GM12878 (cell line): ENCODE measurements at regions of chr9 and their contacts with region 1.

Region 1: DNA sequence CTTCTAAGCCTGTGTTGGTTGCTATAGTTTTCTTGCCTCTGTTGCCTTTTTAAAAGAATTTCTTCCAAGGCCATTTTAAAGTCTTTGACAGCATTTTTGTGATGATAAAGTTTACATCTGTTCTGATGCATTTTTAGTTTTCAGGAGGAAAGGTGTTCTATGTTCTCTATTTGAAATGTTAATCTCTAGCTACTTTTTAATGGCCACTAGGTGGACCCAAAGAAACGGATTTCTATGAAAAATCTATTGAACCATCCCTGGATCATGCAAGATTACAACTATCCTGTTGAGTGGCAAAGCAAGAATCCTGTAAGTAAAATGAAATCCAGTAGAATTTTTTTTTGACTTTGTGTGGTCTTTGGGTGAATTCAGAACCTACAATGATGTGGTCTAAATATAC is 60.2 kb downstream of the MELK start:
- DNase-seq: no peak
- ATAC-seq: peak; percentile 63
- H3K4me3 ChIP-seq: no peak overlapping the region
- H3K27ac ChIP-seq: no peak overlapping the region
- H3K4me1 ChIP-seq: no peaks in the 10 kb centered on the region
- H3K27me3 ChIP-seq: no peaks in the 10 kb centered on the region
- CTCF ChIP-seq: peak; percentile 46 to 56 (median 52); a peak in 5 of 6 replicates
- EP300 ChIP-seq: no peak
- POLR2A ChIP-seq: no peak
- RAD21 ChIP-seq: peak; percentile 57

Region 2: DNA sequence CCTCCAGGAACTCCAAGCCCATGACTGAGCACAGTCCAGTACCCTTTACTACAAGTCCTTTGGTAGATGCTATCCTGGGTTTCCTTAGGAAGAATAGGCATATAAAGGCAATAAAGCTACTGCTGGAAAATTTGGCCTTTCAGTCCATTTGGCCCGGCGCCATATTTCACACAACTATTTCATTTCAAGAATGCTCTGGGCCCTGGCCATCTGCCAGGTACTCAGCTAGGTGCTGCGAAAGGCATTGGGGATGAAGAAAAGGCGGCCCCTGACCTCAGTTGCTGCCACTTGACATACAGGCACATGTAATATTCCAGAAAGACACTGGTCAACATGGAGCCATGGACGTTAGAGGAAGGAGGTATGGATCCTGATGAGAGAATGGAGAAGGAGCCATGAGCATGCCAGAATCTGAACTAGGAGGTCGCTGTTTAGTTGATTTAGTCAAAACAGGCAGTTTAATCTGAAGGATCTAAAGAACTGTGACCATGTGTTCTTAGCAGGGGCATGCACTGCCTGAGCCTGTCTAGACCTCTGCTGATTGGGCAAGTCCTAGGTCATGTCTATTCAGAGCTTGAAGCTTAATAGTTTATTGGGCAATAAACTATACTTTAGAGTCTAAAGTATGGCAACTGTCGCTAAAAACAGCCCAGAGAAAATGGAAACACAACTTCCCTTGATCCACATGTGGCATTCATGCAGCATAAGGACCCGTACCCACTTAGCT is 89.1 kb after region 1 on chr9:
- CTCF ChIA-PET with region 1: interaction called, 9 read pairs
- POLR2A ChIA-PET with region 1: no interaction called
- RAD21 ChIA-PET with region 1: no interaction called
- SMC1A ChIA-PET with region 1: interaction called, 3 read pairs
- in situ Hi-C with region 1: loop called (anchors 5 kb)
- intact Hi-C with region 1: no loop called
- DNase-seq: no peak
- ATAC-seq: no peak
- H3K4me3 ChIP-seq: no peak overlapping the region
- H3K27ac ChIP-seq: no peak overlapping the region
- H3K4me1 ChIP-seq: no peaks in the 10 kb centered on the region
- H3K27me3 ChIP-seq: no peaks in the 10 kb centered on the region
- CTCF ChIP-seq: no peak
- EP300 ChIP-seq: no peak
- POLR2A ChIP-seq: no peak
- RAD21 ChIP-seq: no peak